GM12878 (cell line): ENCODE measurements at regions of chr7 and their contacts with region 1.

Region 1: GRCh38 chr7:17152721-17153120 is 145.7 kb upstream of the AHR start:
- DNase-seq: no peak
- ATAC-seq: peak; percentile 80
- H3K4me3 ChIP-seq: no peak overlapping the region
- H3K27ac ChIP-seq: no peak overlapping the region
- H3K4me1 ChIP-seq: peaks cover 29% of the 10 kb centered on the region
- H3K27me3 ChIP-seq: no peaks in the 10 kb centered on the region
- CTCF ChIP-seq: no peak
- EP300 ChIP-seq: peak; percentile 41 to 55; a peak in 2 of 4 replicates
- POLR2A ChIP-seq: no peak
- RAD21 ChIP-seq: peak; percentile 29; the same call in 1 of the 2 replicates

Region 2: GRCh38 chr7:16450366-16450765 is 702.4 kb before region 1 on chr7:
- CTCF ChIA-PET with region 1: no interaction called
- POLR2A ChIA-PET with region 1: no interaction called
- RAD21 ChIA-PET with region 1: no interaction called
- SMC1A ChIA-PET with region 1: no interaction called
- in situ Hi-C with region 1: no loop called
- intact Hi-C with region 1: no loop called
- DNase-seq: no peak
- ATAC-seq: no peak
- H3K4me3 ChIP-seq: no peak overlapping the region
- H3K27ac ChIP-seq: no peak overlapping the region
- H3K4me1 ChIP-seq: no peaks in the 10 kb centered on the region
- H3K27me3 ChIP-seq: no peaks in the 10 kb centered on the region
- CTCF ChIP-seq: no peak
- EP300 ChIP-seq: no peak
- POLR2A ChIP-seq: no peak
- RAD21 ChIP-seq: no peak

Region 3: GRCh38 chr7:17015598-17016031 is 137.1 kb before region 1 on chr7:
- CTCF ChIA-PET with region 1: no interaction called
- POLR2A ChIA-PET with region 1: no interaction called
- RAD21 ChIA-PET with region 1: interaction called, 3 read pairs
- SMC1A ChIA-PET with region 1: no interaction called
- in situ Hi-C with region 1: no loop called
- intact Hi-C with region 1: loop called (anchors 10 kb)
- DNase-seq: no peak
- ATAC-seq: no peak
- H3K4me3 ChIP-seq: no peak overlapping the region
- H3K27ac ChIP-seq: no peak overlapping the region
- H3K4me1 ChIP-seq: no peaks in the 10 kb centered on the region
- H3K27me3 ChIP-seq: no peaks in the 10 kb centered on the region
- CTCF ChIP-seq: no peak
- EP300 ChIP-seq: no peak
- POLR2A ChIP-seq: no peak
- RAD21 ChIP-seq: no peak

Region 4: GRCh38 chr7:17063045-17063383 is 89.7 kb before region 1 on chr7:
- CTCF ChIA-PET with region 1: interaction called, 3 read pairs
- POLR2A ChIA-PET with region 1: interaction called, 3 read pairs
- RAD21 ChIA-PET with region 1: interaction called, 13 read pairs
- SMC1A ChIA-PET with region 1: interaction called, 8 read pairs
- in situ Hi-C with region 1: no loop called
- intact Hi-C with region 1: loop called (anchors 5 kb)
- DNase-seq: no peak
- ATAC-seq: peak; percentile 65
- H3K4me3 ChIP-seq: no peak overlapping the region
- H3K27ac ChIP-seq: no peak overlapping the region
- H3K4me1 ChIP-seq: no peaks in the 10 kb centered on the region
- H3K27me3 ChIP-seq: no peaks in the 10 kb centered on the region
- CTCF ChIP-seq: peak in 2 of 3 experiments; percentile 4 to 8; a peak in 2 of 6 replicates
- EP300 ChIP-seq: no peak
- POLR2A ChIP-seq: no peak
- RAD21 ChIP-seq: peak; percentile 31; the same call in 1 of the 2 replicates

Region 5: GRCh38 chr7:17123020-17123419 is 29.7 kb before region 1 on chr7:
- CTCF ChIA-PET with region 1: interaction called, 4 read pairs
- POLR2A ChIA-PET with region 1: no interaction called
- RAD21 ChIA-PET with region 1: interaction called, 9 read pairs
- SMC1A ChIA-PET with region 1: interaction called, 21 read pairs
- in situ Hi-C with region 1: no loop called
- intact Hi-C with region 1: no loop called
- DNase-seq: peak; percentile 34
- ATAC-seq: peak; percentile 65
- H3K4me3 ChIP-seq: no peak overlapping the region
- H3K27ac ChIP-seq: peak overlapping the region; percentile 51; the same call in 1 of the 2 replicates
- H3K4me1 ChIP-seq: peaks cover 28% of the 10 kb centered on the region
- H3K27me3 ChIP-seq: no peaks in the 10 kb centered on the region; a peak in 1 of 4 replicates
- CTCF ChIP-seq: no peak
- EP300 ChIP-seq: peak in 1 of 2 experiments; percentile 37; a peak in 1 of 4 replicates
- POLR2A ChIP-seq: no peak
- RAD21 ChIP-seq: no peak

Region 6: DNA sequence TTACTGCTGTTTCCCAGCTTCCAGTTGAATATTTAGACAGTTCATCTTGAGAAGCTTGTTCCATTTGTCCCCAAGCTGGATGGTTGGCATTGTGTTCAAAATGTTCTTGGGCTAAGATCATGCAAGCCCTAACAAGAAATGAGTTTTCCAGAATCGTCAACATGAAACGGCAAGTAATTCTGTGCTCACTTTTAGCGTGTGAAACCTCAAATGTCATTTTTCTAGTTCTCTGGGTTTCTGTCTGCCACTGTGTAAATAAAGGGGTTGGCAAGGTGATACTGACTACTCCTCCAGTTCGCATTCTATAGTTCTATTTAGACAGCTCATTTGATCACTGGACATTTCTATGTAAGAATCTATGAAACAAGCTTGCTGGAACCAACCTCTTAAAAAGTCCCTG is 339.7 kb after region 1 on chr7:
- CTCF ChIA-PET with region 1: no interaction called
- POLR2A ChIA-PET with region 1: no interaction called
- RAD21 ChIA-PET with region 1: no interaction called
- SMC1A ChIA-PET with region 1: no interaction called
- in situ Hi-C with region 1: no loop called
- intact Hi-C with region 1: loop called (anchors 10 kb)
- DNase-seq: peak; percentile 41
- ATAC-seq: peak; percentile 83
- H3K4me3 ChIP-seq: no peak overlapping the region
- H3K27ac ChIP-seq: no peak overlapping the region
- H3K4me1 ChIP-seq: no peaks in the 10 kb centered on the region
- H3K27me3 ChIP-seq: no peaks in the 10 kb centered on the region
- CTCF ChIP-seq: no peak
- EP300 ChIP-seq: peak; percentile 77 to 95
- POLR2A ChIP-seq: no peak
- RAD21 ChIP-seq: no peak